Naive thymus-derived CD4-positive, alpha-beta T cell (primary cell): ENCODE measurements at regions of chr2 and their contacts with region 1.

Region 1: GRCh38 chr2:196263181-196263747 is 91.9 kb upstream of the STK17B start:
- DNase-seq: peak in 7 of 9 donors; percentile 70 to 88 (median 83)
- ATAC-seq: peak; percentile 90
- H3K4me3 ChIP-seq: peak overlapping the region; percentile 31
- H3K4me3 Mint-ChIP-seq: peak overlapping the region; percentile 63 to 90 (median 82)
- H3K27ac ChIP-seq: peak overlapping the region; percentile 87
- H3K27ac Mint-ChIP-seq: peak overlapping the region; percentile 90 to 99 (median 97)
- H3K4me1 ChIP-seq: peaks cover 53 to 82% of the 10 kb centered on the region in 2 donors
- H3K4me1 Mint-ChIP-seq: peaks cover 39 to 94% (median 89%) of the 10 kb centered on the region in 7 donors
- H3K27me3 ChIP-seq: no peaks in the 10 kb centered on the region
- H3K27me3 Mint-ChIP-seq: no peaks in the 10 kb centered on the region

Region 2: GRCh38 chr2:195533771-195534642 is 729.3 kb before region 1 on chr2:
- CTCF ChIA-PET with region 1: no interaction called
- POLR2A ChIA-PET with region 1: no interaction called
- intact Hi-C with region 1: loop called (anchors 10 kb)
- DNase-seq: peak in 8 of 9 donors; percentile 28 to 63 (median 42)
- ATAC-seq: peak; percentile 48
- H3K4me3 ChIP-seq: peak overlapping the region; percentile 51
- H3K4me3 Mint-ChIP-seq: peak overlapping the region; percentile 77 to 95 (median 90)
- H3K27ac ChIP-seq: peak overlapping the region; percentile 77
- H3K27ac Mint-ChIP-seq: peak overlapping the region; percentile 92 to 100 (median 98)
- H3K4me1 ChIP-seq: peaks cover 70 to 73% of the 10 kb centered on the region in 2 donors
- H3K4me1 Mint-ChIP-seq: peaks cover 69 to 90% (median 86%) of the 10 kb centered on the region in 7 donors
- H3K27me3 ChIP-seq: no peaks in the 10 kb centered on the region
- H3K27me3 Mint-ChIP-seq: no peaks in the 10 kb centered on the region

Region 3: GRCh38 chr2:196213252-196213980 is 49.8 kb before region 1 on chr2:
- CTCF ChIA-PET with region 1: no interaction called
- POLR2A ChIA-PET with region 1: interaction called, 23 read pairs
- intact Hi-C with region 1: loop called (anchors 1 kb)
- DNase-seq: peak in 7 of 9 donors; percentile 29 to 77 (median 58)
- ATAC-seq: peak; percentile 36
- H3K4me3 ChIP-seq: no peak overlapping the region
- H3K4me3 Mint-ChIP-seq: peak overlapping the region in 9 of 10 donors; percentile 0 to 94 (median 61)
- H3K27ac ChIP-seq: peak overlapping the region; percentile 78
- H3K27ac Mint-ChIP-seq: peak overlapping the region in 8 of 9 donors; percentile 95 to 100 (median 98)
- H3K4me1 ChIP-seq: peaks cover 14 to 57% of the 10 kb centered on the region in 2 donors
- H3K4me1 Mint-ChIP-seq: peaks cover 51 to 96% (median 94%) of the 10 kb centered on the region in 7 donors
- H3K27me3 ChIP-seq: no peaks in the 10 kb centered on the region
- H3K27me3 Mint-ChIP-seq: no peaks in the 10 kb centered on the region

Region 4: DNA sequence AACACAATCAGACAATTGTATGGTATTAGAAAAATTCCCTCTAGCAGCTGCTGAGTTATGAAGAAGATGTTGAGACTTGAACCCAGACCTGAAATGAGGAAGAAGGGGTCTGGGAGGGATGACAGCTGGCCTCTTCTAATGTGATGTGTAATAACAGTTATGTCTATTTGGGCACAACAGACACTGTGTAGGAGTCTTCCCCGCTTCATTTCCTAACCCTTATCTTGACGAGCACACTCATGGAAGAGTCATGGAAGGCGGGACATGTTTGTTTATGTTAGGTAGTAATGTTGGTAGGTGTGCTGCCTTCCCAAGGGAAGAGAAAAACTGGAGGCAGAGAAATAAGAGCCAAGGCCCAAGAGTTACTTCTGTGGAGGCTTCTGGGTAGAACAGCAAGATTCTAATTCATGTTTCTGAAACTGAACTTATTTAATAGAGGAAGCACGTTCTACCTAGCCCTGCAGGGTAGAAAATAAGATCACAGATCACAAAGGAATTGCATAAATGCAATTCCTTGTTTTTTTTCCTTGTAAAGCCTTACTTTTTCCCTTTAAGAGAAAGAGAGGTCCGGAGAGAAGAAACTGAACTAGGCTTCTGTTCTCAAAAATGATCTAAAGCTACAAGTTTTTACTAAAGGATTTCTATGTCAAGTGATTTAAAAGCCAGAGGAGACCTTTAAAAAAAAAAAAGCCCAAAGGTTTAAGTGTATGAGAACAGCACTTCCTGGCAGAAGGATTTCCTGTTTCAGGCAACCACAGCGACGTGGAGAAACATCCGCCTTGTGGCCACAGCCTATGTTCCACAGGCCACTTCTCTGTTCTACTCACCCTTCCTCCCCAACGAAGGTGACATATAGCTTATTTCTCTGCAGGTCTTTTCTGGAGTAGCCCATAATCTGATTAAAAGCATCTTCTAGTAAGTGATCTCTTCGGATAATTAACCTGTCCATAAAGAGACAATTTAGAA is 23.4 kb before region 1 on chr2:
- CTCF ChIA-PET with region 1: interaction called, 20 read pairs
- POLR2A ChIA-PET with region 1: interaction called, 215 read pairs
- intact Hi-C with region 1: loop called (anchors 1 kb)
- DNase-seq: peak; percentile 33 to 90 (median 83)
- ATAC-seq: peak; percentile 87
- H3K4me3 ChIP-seq: peak overlapping the region; percentile 36
- H3K4me3 Mint-ChIP-seq: peak overlapping the region; percentile 64 to 87 (median 76)
- H3K27ac ChIP-seq: peak overlapping the region; percentile 71
- H3K27ac Mint-ChIP-seq: peak overlapping the region; percentile 90 to 99 (median 97)
- H3K4me1 ChIP-seq: peaks cover 57 to 60% of the 10 kb centered on the region in 2 donors
- H3K4me1 Mint-ChIP-seq: peaks cover 55 to 90% (median 80%) of the 10 kb centered on the region in 7 donors
- H3K27me3 ChIP-seq: no peaks in the 10 kb centered on the region
- H3K27me3 Mint-ChIP-seq: no peaks in the 10 kb centered on the region